B cell (primary cell): ENCODE measurements at regions of chr1 and their contacts with region 1.

Region 1: GRCh38 chr1:114346480-114347029 is 164.4 kb downstream of the TRIM33 start:
- DNase-seq: peak; percentile 98
- ATAC-seq: peak; percentile 100
- H3K4me3 ChIP-seq: peak overlapping the region; percentile 24 to 61 (median 53)
- H3K4me3 Mint-ChIP-seq: peak overlapping the region; percentile 97
- H3K27ac ChIP-seq: no peak overlapping the region
- H3K27ac Mint-ChIP-seq: peak overlapping the region; percentile 62
- H3K4me1 ChIP-seq: peaks cover 0 to 13% of the 10 kb centered on the region in 2 donors
- H3K4me1 Mint-ChIP-seq: peaks cover 10% of the 10 kb centered on the region
- H3K27me3 ChIP-seq: peaks cover 0 to 3% (median under 1%) of the 10 kb centered on the region in 4 experiments
- H3K27me3 Mint-ChIP-seq: peaks cover 14% of the 10 kb centered on the region
- CTCF ChIP-seq: peak; percentile 100

Region 2: GRCh38 chr1:114428083-114428749 is 81.7 kb after region 1 on chr1:
- CTCF ChIA-PET with region 1: interaction called, 7 read pairs
- POLR2A ChIA-PET with region 1: no interaction called
- intact Hi-C with region 1: loop called (anchors 1 kb)
- DNase-seq: peak; percentile 8
- ATAC-seq: no peak
- H3K4me3 ChIP-seq: no peak overlapping the region
- H3K4me3 Mint-ChIP-seq: no peak overlapping the region
- H3K27ac ChIP-seq: peak overlapping the region in 1 of 2 donors; percentile 30
- H3K27ac Mint-ChIP-seq: no peak overlapping the region
- H3K4me1 ChIP-seq: no peaks in the 10 kb centered on the region
- H3K4me1 Mint-ChIP-seq: peaks cover 2% of the 10 kb centered on the region
- H3K27me3 ChIP-seq: no peaks in the 10 kb centered on the region
- H3K27me3 Mint-ChIP-seq: no peaks in the 10 kb centered on the region
- CTCF ChIP-seq: peak; percentile 63

Region 3: GRCh38 chr1:114558544-114558943 is 212.0 kb after region 1 on chr1:
- CTCF ChIA-PET with region 1: interaction called, 7 read pairs
- POLR2A ChIA-PET with region 1: no interaction called
- intact Hi-C with region 1: loop called (anchors 1 kb)
- DNase-seq: peak; percentile 49
- ATAC-seq: peak; percentile 63
- H3K4me3 ChIP-seq: peak overlapping the region in 1 of 5 experiments; percentile 3
- H3K4me3 Mint-ChIP-seq: peak overlapping the region; percentile 3
- H3K27ac ChIP-seq: peak overlapping the region in 1 of 2 donors; percentile 21
- H3K27ac Mint-ChIP-seq: peak overlapping the region; percentile 16
- H3K4me1 ChIP-seq: peaks cover 31% of the 10 kb centered on the region in 2 donors
- H3K4me1 Mint-ChIP-seq: peaks cover 31% of the 10 kb centered on the region
- H3K27me3 ChIP-seq: no peaks in the 10 kb centered on the region
- H3K27me3 Mint-ChIP-seq: no peaks in the 10 kb centered on the region
- CTCF ChIP-seq: peak; percentile 75

Region 4: GRCh38 chr1:114670083-114671010 is 323.8 kb after region 1 on chr1:
- CTCF ChIA-PET with region 1: interaction called, 3 read pairs
- POLR2A ChIA-PET with region 1: no interaction called
- intact Hi-C with region 1: loop called (anchors 1 kb)
- DNase-seq: peak; percentile 91
- ATAC-seq: peak; percentile 99
- H3K4me3 ChIP-seq: peak overlapping the region; percentile 65 to 84 (median 72)
- H3K4me3 Mint-ChIP-seq: peak overlapping the region; percentile 99
- H3K27ac ChIP-seq: no peak overlapping the region
- H3K27ac Mint-ChIP-seq: peak overlapping the region; percentile 73
- H3K4me1 ChIP-seq: peaks cover 6 to 14% of the 10 kb centered on the region in 2 donors
- H3K4me1 Mint-ChIP-seq: peaks cover 14% of the 10 kb centered on the region
- H3K27me3 ChIP-seq: peaks cover 0 to 6% (median 0%) of the 10 kb centered on the region in 4 experiments
- H3K27me3 Mint-ChIP-seq: peaks cover 45% of the 10 kb centered on the region
- CTCF ChIP-seq: no peak

Region 5: DNA sequence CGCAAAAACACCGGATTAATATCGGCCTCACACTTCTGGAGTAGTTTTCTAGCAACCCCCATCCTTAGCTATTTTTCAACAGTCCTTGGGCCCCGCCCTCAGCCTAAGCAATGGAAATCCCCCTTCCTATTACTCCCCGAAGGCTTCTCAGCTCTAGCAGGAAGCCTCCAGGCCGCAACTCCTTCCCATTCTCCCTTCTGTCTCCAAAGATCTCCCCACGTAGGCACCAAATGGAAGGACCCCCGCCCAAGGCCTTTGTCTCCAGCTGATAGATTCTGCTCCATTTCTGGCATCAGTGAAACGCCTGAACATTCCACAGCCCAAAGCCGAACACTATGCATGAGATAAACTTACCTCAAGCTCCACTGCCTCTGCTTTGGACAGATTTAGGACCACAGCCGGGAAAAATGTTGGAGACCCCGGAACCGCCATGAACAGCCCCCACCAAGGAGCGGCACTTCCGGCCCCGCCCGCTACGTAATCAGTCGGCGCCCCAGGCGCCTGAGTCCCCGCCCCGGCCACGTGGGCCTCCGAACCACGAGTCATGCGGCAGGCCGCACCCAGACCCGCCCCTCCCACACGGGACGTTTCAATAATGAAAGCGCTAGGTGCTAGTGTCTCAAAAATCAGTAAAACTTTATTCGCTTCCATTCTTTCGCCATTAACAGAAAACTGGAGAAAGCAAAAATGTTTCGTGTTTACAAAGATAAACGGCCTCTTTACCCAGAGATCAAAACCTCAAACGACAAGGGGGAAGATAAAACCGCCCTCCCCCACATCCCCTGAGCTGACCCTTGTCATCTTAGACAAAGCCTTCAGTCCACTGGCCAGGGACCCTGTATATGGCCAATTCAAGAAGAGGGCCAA is 370.0 kb after region 1 on chr1 and contains the start of gene NRAS:
- CTCF ChIA-PET with region 1: interaction called, 3 read pairs
- POLR2A ChIA-PET with region 1: no interaction called
- intact Hi-C with region 1: loop called (anchors 1 kb)
- DNase-seq: peak; percentile 96
- ATAC-seq: peak; percentile 96
- H3K4me3 ChIP-seq: peak within 1 kb of the TSS; percentile 69 to 95 (median 89)
- H3K4me3 Mint-ChIP-seq: peak within 1 kb of the TSS; percentile 99
- H3K27ac ChIP-seq: peak within 1 kb of the TSS; percentile 97
- H3K27ac Mint-ChIP-seq: peak within 1 kb of the TSS; percentile 99
- H3K4me1 ChIP-seq: peaks cover 15 to 16% of the 10 kb centered on the region in 2 donors
- H3K4me1 Mint-ChIP-seq: peaks cover 29% of the 10 kb centered on the region
- H3K27me3 ChIP-seq: no peaks in the 10 kb centered on the region
- H3K27me3 Mint-ChIP-seq: no peaks in the 10 kb centered on the region
- CTCF ChIP-seq: no peak
- total RNA-seq, gene NRAS: 35.0 and 35.3 TPM in 2 replicates